Activated CD4-positive, alpha-beta memory T cell treated with anti-CD3 and anti-CD28 coated beads for 36 hours (primary cell): ENCODE measurements at regions of chr15 and their contacts with region 1.

Region 1: GRCh38 chr15:31977812-31978661 is 52.3 kb upstream of the CHRNA7 start:
- DNase-seq: peak; percentile 66
- H3K4me3 Mint-ChIP-seq: no peak overlapping the region
- H3K27ac Mint-ChIP-seq: no peak overlapping the region
- H3K4me1 Mint-ChIP-seq: peaks cover 8% of the 10 kb centered on the region
- H3K27me3 Mint-ChIP-seq: peaks cover 19% of the 10 kb centered on the region

Region 2: DNA sequence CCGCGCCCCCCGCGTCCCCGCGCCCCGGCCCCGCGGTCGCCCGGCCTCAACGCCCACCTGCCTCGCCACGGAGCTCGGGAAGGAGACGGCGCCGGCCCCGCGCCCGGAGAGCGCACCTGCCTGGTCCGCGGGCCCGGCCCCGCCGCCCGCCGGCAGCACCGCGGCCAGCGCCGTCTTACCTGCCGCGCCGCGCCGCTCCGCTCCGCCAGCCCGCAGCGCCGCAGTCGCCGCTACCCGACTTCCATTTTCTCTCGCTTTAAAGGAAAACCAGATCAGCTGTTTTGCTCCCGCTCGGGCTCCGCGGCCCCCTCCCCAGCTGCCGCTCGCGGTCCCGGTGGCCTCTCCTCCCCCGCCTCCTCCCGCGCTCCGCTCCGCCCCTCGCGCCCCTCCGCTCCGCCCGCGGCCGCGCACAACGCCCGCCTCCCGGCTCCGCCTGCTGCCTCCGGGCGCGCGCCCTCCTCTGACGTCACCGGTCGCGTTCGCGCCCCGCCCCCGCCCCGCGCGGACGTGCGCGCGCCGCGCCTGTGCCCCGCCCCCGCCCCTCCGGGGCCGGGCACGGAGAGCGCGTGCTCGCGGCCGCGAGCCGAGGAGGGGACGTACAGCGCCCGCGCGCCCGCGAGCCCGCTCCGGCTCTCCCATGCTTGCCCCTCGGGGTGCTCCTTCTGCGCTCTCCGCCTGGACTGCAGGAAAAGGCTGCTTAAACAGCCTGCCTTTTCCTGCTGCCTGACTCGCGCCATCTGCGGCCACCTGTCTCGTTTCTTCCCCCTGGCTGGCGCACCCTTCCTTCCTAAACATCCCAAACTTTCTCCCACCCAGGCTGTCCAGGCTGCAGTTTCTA is 107.5 kb before region 1 on chr15:
- CTCF ChIA-PET with region 1: no interaction called
- POLR2A ChIA-PET with region 1: no interaction called
- intact Hi-C with region 1: loop called (anchors 5 kb)
- DNase-seq: peak; percentile 84
- H3K4me3 Mint-ChIP-seq: peak within 1 kb of the TSS; percentile 88
- H3K27ac Mint-ChIP-seq: peak within 1 kb of the TSS; percentile 61
- H3K4me1 Mint-ChIP-seq: peaks cover 9% of the 10 kb centered on the region
- H3K27me3 Mint-ChIP-seq: peaks cover 6% of the 10 kb centered on the region